HEK293 (cell line): ENCODE measurements at regions of chr5 and their contacts with region 1.

Region 1: DNA sequence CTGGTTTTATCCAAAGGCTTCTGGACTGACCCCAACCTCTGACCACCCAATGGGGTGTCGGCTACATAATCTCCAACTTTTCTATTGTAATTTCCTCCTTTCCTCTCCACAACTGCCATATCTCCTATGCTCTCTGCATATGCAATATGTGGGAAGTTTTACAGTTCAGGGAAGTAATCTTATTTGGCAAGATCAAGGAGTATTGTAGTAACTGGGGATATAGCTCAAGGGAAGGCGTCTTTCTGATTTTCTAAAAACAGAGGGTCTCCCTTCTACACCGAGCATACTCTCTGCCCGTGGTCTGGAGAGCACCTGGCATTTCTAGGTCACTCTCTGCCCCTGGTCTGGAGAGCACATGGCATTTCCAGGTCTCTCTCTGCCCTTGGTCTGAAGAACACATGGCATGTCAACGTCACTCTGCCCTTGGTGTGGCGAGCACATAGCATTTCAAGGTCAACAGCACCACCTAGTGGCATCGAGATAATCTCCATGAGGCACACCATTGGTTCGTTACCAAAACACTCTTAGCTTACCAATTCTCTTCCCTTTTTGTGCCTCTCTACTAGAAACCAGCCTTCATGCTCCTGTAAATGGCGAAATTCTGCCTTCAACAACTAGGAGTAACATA is 616.4 kb upstream of the NUDT12 start:
- H3K4me3 ChIP-seq: no peak overlapping the region
- H3K27ac ChIP-seq: no peak overlapping the region
- H3K4me1 ChIP-seq: no peaks in the 10 kb centered on the region
- CTCF ChIP-seq: peak; percentile 95

Region 2: GRCh38 chr5:103582364-103582763 is 596.6 kb before region 1 on chr5:
- CTCF ChIA-PET with region 1: interaction called, 112 read pairs
- POLR2A ChIA-PET with region 1: no interaction called
- H3K4me3 ChIP-seq: no peak overlapping the region
- H3K27ac ChIP-seq: no peak overlapping the region
- H3K4me1 ChIP-seq: no peaks in the 10 kb centered on the region
- CTCF ChIP-seq: no peak

Region 3: GRCh38 chr5:103867857-103868598 is 310.9 kb before region 1 on chr5:
- CTCF ChIA-PET with region 1: no interaction called
- POLR2A ChIA-PET with region 1: no interaction called
- H3K4me3 ChIP-seq: no peak overlapping the region
- H3K27ac ChIP-seq: no peak overlapping the region
- H3K4me1 ChIP-seq: no peaks in the 10 kb centered on the region; the same call in 1 of the 2 replicates
- CTCF ChIP-seq: no peak